ENCODE measurements at regions of chr6 and their contacts with region 1.

Region 1: DNA sequence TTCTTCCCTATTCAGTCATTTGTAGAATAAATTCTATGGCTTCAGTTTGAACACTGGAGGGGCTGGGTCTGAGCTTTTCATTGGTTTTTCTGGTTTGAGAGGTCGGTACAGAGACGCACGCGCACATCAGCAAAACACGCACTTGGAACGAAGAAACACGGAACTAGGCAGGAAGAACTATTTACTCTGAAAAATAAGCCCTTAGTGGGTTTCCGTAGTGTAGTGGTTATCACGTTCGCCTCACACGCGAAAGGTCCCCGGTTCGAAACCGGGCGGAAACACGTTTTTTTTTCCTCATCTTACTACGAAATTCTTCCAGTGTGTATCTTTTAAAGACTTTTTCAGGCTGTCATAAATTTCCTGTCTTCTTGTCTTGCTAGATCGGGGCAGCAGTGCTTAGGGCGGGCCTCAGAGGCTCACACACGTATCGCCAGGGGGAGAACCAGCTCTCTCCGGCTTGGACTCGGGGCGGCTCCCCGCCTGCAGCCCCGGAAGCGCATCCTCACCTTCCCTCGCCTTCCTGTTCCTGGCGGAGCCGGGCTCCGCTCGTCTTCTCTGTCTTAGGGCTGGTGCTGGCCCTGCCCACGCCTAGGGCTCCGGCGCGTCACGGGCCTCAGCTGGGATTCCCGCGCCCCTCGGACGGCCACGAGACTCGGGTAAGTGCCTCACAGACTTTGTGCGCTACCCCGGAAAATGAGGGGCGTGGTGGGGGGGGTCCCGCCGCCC is at the start of gene HMGN4:
- DNase-seq: peak; percentile 93
- H3K4me3 ChIP-seq: peak within 1 kb of the TSS; percentile 97
- H3K27ac ChIP-seq: peak within 1 kb of the TSS; percentile 93
- H3K4me1 ChIP-seq: peaks cover 69% of the 10 kb centered on the region
- CTCF ChIP-seq: 0 out of 2 replicates have a peak, but pooled peaks have one; percentile 22
- total RNA-seq, gene HMGN4: 113 and 116 TPM in 2 replicates

Region 2: GRCh38 chr6:26312501-26313390 is 225.3 kb before region 1 on chr6:
- CTCF ChIA-PET with region 1: no interaction called
- POLR2A ChIA-PET with region 1: interaction called, 4 read pairs
- intact Hi-C with region 1: loop called (anchors 5 kb)
- DNase-seq: peak; percentile 80
- H3K4me3 ChIP-seq: peak overlapping the region; percentile 71
- H3K27ac ChIP-seq: peak overlapping the region; percentile 43
- H3K4me1 ChIP-seq: peaks cover 28% of the 10 kb centered on the region
- CTCF ChIP-seq: no peak

Region 3: DNA sequence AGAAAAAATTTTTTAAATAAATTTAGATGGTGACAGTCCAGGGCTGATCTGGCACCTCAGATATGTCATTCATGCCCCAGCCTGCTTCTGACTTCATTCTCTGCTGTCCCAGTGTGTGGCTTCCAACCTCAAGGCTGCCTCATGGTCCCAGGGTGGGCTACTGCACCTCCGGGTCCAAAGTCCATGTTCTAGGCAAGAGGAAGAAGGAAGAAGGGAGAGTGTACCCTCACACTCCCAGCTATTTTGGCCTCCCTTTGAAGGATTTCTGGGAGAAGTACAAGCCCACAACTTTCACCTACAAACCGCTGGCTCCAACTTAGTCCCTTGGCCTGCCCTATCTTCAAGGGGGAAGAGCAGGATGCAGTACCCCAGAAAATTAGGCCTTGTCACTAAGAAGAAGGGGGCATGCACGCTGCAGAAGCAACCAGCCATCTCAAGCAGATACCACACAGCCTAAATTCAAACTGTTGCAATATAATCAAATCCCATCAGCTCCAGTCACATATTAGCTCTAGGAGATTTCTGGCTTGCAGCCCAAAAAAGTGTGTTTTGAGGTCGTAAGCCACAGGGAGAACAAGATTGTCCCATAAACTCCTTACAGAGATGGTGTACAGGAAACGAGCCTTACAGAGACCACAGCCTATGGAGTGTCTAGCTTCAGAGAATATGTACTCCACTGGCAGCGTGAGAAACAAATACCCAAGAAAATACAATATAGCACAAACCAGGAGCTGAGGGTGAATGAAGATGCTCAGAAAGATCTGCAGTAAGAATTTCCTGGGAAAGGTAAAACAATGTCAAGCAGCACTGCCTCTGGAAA is 173.9 kb before region 1 on chr6:
- CTCF ChIA-PET with region 1: no interaction called
- POLR2A ChIA-PET with region 1: interaction called, 4 read pairs
- intact Hi-C with region 1: loop called (anchors 2 kb)
- DNase-seq: peak; percentile 52
- H3K4me3 ChIP-seq: peak overlapping the region; percentile 77
- H3K27ac ChIP-seq: peak overlapping the region; percentile 96
- H3K4me1 ChIP-seq: peaks cover 70% of the 10 kb centered on the region
- CTCF ChIP-seq: no peak

Region 4: GRCh38 chr6:26501482-26501986 is 36.5 kb before region 1 on chr6:
- CTCF ChIA-PET with region 1: no interaction called
- POLR2A ChIA-PET with region 1: interaction called, 28 read pairs
- intact Hi-C with region 1: loop called (anchors 2 kb)
- DNase-seq: no peak
- H3K4me3 ChIP-seq: peak overlapping the region; percentile 53
- H3K27ac ChIP-seq: peak overlapping the region; percentile 98
- H3K4me1 ChIP-seq: peaks cover 68% of the 10 kb centered on the region
- CTCF ChIP-seq: no peak

Region 5: GRCh38 chr6:26553635-26554446 is 15.8 kb after region 1 on chr6:
- CTCF ChIA-PET with region 1: no interaction called
- POLR2A ChIA-PET with region 1: interaction called, 24 read pairs
- intact Hi-C with region 1: loop called (anchors 1 kb)
- DNase-seq: peak; percentile 84
- H3K4me3 ChIP-seq: peak overlapping the region; percentile 80
- H3K27ac ChIP-seq: peak overlapping the region; percentile 91
- H3K4me1 ChIP-seq: peaks cover 62% of the 10 kb centered on the region
- CTCF ChIP-seq: no peak